GM13976 (cell line): ENCODE measurements at regions of chr6 and their contacts with region 1.

Region 1: GRCh38 chr6:109705258-109705657 is 14.2 kb downstream of the FIG4 start:
- DNase-seq: peak; percentile 62
- CTCF ChIP-seq: peak; percentile 72

Region 2: DNA sequence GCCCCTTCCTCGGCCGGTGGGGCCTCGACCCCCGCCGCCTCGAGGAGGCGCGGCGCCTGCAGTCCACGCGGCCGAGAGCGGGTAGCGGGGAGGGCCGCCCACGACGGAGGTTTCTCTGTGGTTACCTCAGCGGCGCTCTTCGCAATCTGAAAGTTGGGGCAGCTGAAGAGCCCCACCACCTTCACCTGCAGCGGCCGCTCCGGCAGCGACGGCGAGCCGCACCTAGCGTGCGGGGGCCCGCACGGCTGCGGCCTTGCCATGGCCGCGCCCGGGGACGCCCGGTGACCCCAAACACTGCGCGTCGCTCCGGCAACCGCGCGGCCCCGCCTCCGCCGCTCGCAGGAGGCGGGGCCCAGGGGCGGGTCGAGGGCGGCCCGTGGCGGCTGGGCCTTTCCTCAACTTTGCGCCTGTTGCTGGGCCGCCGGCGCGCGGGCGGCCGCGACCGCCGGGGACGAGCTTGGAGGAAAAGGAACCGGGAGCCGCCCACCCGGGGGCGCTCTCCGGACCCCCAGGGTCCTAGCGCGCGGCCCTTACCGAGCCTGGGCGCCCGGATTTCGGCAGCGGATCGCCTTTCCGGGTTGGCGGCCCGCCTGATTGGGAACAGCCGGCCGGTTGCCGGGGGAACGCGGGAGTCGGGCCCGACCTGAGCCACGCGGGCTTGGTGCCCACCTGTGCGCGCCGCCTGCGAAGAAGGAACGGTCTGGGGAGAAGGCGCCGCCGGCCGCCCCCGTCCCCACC is 264.8 kb before region 1 on chr6 and contains the starts of genes PPIL6 and SMPD2:
- in situ Hi-C with region 1: no loop called
- DNase-seq: peak; percentile 96
- CTCF ChIP-seq: no peak

Region 3: DNA sequence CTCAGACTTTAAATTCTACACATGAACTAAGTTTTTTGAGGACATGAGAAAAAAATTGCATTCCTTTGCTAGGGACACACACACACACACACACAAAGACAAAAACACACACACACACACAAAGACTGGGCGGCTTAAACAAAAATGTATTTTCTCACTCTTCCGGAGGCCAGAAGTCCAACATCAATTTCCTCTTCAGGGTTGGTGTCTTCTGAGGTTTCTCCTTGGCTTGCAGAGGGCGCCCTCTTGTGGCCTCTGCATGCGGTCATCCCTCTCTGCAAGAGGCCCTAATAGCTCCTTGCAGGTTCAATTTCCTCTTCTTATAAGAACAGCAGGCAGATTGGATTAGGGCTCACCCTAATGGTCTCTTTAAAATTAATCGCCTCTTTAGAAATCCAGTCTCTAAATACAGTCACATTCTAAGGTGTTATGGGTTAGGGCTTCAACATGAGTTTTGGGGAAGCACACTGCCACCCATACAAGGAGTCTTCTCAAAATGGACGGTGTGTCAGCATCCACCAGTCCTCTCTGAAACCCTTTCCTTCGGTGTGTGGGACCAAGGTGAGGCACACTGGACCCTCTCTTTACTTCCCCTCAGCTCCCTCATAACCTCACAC is 334.2 kb after region 1 on chr6:
- in situ Hi-C with region 1: loop called (anchors 10 kb)
- DNase-seq: peak; percentile 80
- CTCF ChIP-seq: peak; percentile 81

Region 4: GRCh38 chr6:110398778-110399177 is 693.5 kb after region 1 on chr6:
- in situ Hi-C with region 1: loop called (anchors 10 kb)
- DNase-seq: no peak
- CTCF ChIP-seq: no peak